ENCODE measurements at regions of chr4 and their contacts with region 1.

Region 1: DNA sequence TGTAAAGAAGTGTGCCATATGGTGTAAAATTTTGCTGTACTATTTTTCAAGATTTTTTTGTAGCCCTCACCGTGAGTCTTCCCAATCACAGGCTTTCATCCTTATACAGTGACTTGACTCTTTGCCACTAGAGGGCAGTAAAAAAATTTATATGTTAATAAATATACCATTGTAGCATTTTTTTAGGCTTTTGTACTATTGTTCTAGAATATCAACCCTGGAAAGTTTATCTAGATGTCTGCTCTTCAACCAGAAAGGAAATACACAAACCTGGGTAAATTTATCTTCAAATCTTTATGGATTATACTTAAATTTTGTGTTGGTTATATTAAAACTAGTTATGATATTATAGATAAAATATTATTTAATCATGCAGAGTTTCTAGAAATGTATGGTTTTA is 235.3 kb downstream of the TENM3 start:
- DNase-seq: peak; percentile 20
- H3K4me3 ChIP-seq: no peak overlapping the region
- H3K27ac ChIP-seq: no peak overlapping the region
- H3K4me1 ChIP-seq: no peaks in the 10 kb centered on the region
- H3K27me3 ChIP-seq: no peaks in the 10 kb centered on the region
- CTCF ChIP-seq: peak; percentile 54 to 57

Region 2: DNA sequence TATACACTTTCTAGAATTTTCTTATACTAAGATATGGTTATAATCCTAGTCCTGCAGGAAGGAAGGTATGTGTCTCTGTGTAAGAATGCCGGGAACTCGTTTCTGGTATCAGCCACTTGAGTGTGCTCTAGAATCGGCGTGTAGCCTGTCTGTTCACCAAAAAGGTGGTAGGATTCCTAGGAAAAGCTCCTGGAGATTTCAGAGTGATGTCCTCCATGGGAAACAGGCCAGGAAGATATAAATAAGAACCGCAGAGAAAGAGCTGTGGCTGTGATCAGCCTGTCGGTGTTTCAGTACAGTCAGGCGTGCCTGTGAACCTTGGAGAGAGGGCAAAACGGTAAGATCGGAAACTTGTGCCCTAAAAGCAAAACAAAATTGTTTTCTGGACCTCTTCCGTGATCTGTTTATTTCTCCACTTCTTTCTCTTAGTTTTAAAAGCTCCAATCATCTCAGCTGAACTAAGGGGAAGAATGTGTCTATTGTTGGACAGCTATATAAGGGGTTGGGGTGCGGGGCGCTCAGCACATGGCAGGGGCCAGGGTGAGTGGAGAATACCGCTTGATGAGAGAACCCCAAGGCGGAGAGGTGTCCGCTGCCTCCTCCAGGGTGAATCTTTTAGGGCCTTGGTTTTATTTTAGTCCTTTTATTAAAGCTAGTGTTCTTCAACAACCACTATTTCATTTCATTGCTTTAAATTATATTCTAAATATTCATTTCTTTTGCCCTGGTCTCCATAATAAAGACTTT is 539.1 kb before region 1 on chr4:
- CTCF ChIA-PET with region 1: no interaction called
- dilution Hi-C with region 1: no loop called
- in situ Hi-C with region 1: no loop called
- intact Hi-C with region 1: loop called (anchors 10 kb)
- DNase-seq: peak; percentile 59
- H3K4me3 ChIP-seq: peak overlapping the region in 1 of 3 experiments; percentile 26
- H3K27ac ChIP-seq: peak overlapping the region; percentile 25
- H3K4me1 ChIP-seq: peaks cover 4% of the 10 kb centered on the region
- H3K27me3 ChIP-seq: no peaks in the 10 kb centered on the region
- CTCF ChIP-seq: peak; percentile 46 to 63

Region 3: DNA sequence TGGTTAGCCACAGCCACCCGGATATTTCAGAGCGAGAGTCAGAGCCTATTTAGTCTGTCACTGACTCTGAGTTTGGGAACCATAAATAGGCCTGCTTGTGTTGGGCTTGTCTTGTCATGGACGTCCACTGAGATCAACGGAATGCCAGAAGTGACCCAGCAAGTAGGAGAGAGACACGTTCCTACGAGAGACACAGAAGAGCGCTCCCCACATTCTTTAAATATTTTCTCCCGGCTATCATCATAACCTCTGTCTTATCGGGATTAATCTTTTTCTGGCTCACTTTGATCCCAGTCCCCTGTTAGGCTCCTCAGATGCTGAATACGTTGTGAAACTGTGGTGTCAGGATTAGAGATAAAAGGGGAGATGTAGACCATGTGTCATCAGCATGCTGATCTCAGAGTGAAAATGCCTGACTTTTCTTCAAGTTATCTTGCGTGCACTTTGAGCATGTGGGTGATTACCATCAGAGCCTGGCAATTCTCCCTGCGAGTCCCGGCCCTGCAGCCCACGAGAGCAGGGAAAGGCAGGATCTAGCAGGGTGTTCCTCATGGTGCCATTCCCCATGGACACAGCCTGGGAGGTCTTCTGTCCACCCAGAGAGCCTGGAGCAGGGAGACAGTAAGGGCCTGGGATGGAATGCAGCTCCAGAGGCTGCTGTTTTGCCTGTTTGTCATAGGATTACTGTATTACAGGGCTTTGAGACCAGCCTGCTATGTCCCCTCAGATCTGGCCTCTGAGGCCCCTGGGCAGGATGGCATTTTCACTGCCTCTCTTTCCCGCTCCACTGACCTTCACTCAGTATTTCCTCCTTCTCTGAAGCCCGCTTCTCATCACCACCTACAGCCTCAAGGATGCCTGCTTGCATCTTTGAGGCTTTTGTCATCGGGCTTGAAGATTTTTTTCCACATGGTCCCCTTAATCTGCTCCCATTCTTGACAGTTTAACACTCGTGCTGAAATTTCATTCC is 238.0 kb before region 1 on chr4:
- CTCF ChIA-PET with region 1: no interaction called
- dilution Hi-C with region 1: no loop called
- in situ Hi-C with region 1: no loop called
- intact Hi-C with region 1: loop called (anchors 1 kb)
- DNase-seq: no peak
- H3K4me3 ChIP-seq: no peak overlapping the region
- H3K27ac ChIP-seq: no peak overlapping the region
- H3K4me1 ChIP-seq: peaks cover 38% of the 10 kb centered on the region
- H3K27me3 ChIP-seq: no peaks in the 10 kb centered on the region
- CTCF ChIP-seq: no peak

Region 4: DNA sequence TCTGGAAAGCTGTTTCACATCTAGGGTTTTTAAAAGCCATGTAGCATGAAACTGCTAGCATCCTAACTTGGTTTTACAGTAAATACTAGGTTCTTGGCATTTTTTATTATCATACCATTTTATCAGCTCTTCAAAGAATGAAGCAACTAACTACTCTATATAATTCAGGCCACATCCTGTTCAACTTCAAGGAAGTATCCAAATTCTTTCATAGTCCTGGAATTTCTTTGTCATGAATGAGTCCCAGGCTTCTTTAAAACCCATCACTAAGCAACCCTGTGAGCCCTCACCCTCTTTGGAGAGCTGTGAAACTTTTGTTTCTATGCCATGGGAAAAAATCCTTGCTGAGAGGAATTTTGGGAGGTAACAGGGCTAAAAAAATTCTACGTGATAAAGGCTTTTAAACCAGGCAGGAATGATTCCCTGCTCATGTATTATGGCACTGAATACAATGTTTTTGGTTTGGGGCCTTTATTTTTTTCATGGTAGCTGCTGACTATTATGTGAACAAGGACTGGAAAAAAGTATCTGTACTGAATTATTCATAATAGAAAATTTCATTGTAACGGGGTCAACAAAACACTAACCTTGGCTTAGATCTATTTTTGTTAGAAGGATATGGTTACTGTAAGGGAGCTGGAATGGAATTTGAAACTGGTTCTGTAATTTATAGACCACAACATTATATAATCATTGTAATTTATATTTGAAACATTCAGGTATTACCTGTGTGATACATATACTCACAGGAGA is 273.9 kb after region 1 on chr4:
- CTCF ChIA-PET with region 1: no interaction called
- dilution Hi-C with region 1: no loop called
- in situ Hi-C with region 1: no loop called
- intact Hi-C with region 1: no loop called
- DNase-seq: peak; percentile 26
- H3K4me3 ChIP-seq: no peak overlapping the region
- H3K27ac ChIP-seq: peak overlapping the region; percentile 36
- H3K4me1 ChIP-seq: peaks cover 7% of the 10 kb centered on the region
- H3K27me3 ChIP-seq: no peaks in the 10 kb centered on the region
- CTCF ChIP-seq: no peak

Region 5: GRCh38 chr4:182917182-182918043 is 438.9 kb after region 1 on chr4 and contains the start of gene DCTD:
- CTCF ChIA-PET with region 1: no interaction called
- dilution Hi-C with region 1: no loop called
- in situ Hi-C with region 1: no loop called
- intact Hi-C with region 1: loop called (anchors 5 kb)
- DNase-seq: peak; percentile 55
- H3K4me3 ChIP-seq: peak within 1 kb of the TSS; percentile 69 to 75 (median 72)
- H3K27ac ChIP-seq: peak within 1 kb of the TSS; percentile 43
- H3K4me1 ChIP-seq: peaks cover 14% of the 10 kb centered on the region
- H3K27me3 ChIP-seq: no peaks in the 10 kb centered on the region
- CTCF ChIP-seq: peak in 1 of 2 donors; percentile 33
- total RNA-seq, gene DCTD: 71.3 to 121 TPM